Sciatic nerve (tissue), 2 donors: ENCODE measurements at regions of chr1 and their contacts with region 1.

Region 1: GRCh38 chr1:30327370-30328099 is 395.9 kb downstream of the MATN1 start:
- DNase-seq: peak; percentile 37
- ATAC-seq: no peak

Region 2: GRCh38 chr1:30277911-30278310 is 49.6 kb before region 1 on chr1:
- intact Hi-C with region 1: loop called (anchors 1 kb)
- DNase-seq: no peak
- ATAC-seq: no peak